Naive thymus-derived CD4-positive, alpha-beta T cell (primary cell): ENCODE measurements at regions of chr19 and their contacts with region 1.

Region 1: DNA sequence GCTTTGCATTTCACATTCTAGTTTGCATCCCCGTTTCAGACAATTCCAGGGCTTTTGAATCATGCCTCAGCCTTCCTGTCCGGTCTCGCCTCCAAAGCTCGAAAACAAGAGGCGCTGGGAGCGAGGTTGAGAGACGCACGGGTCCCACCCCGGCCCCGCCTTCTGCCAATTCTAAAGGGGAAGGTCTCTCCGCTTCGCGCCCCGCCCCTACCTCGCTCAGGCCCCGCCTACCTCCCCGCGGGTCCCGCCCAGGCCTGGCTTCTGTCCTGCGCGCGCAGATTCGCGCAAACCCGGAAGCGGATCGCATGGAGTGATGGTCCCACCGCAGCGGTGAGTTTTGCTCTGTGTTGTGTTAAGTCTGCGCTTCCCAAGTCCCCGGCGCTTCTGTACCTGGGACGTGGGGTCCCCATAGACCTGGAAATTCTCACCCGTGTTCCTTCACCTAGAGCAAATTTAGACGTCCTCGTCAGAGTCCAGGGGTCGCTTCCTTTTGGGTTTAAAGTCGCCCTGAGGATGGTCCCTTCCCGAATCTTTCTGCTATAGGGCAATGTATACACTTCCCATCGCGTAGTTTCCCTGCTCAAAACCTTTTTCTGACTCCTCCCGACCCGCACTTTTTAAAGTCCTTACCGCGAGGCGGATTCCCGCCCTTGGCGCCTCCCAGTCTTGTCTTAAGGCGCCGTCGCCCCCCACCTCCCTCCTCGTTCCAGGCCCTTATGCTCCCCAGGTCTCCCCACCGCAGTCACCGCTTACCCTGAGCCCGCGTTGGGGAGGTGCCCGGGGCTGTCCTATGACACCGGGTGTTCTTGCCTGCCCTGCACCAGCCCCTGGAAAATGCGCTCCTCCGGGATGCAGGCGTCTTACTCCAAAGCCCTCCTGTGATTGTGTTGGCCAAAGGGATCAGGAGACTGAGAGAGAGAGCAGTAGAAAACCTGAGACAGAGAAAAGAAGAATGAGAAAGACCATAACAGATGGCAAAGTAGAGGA is at the start of gene ZNF845:
- DNase-seq: peak; percentile 91 to 99 (median 97)
- ATAC-seq: peak; percentile 99
- H3K4me3 ChIP-seq: peak within 1 kb of the TSS; percentile 93
- H3K4me3 Mint-ChIP-seq: peak within 1 kb of the TSS; percentile 87 to 97 (median 94)
- H3K27ac ChIP-seq: peak within 1 kb of the TSS; percentile 74
- H3K27ac Mint-ChIP-seq: peak within 1 kb of the TSS; percentile 87 to 97 (median 89)
- H3K4me1 ChIP-seq: peaks cover 0 to 5% of the 10 kb centered on the region in 2 donors
- H3K4me1 Mint-ChIP-seq: peaks cover 14 to 43% (median 22%) of the 10 kb centered on the region in 7 donors
- H3K27me3 ChIP-seq: no peaks in the 10 kb centered on the region
- H3K27me3 Mint-ChIP-seq: peaks cover 0 to 8% (median 6%) of the 10 kb centered on the region in 5 donors
- total RNA-seq, gene ZNF845: 4.6 to 18.9 (median 11.1) TPM

Region 2: GRCh38 chr19:52527134-52527955 is 806.4 kb before region 1 on chr19 and contains the start of gene ZNF808:
- CTCF ChIA-PET with region 1: no interaction called
- POLR2A ChIA-PET with region 1: no interaction called
- intact Hi-C with region 1: loop called (anchors 1 to 2 kb)
- DNase-seq: peak; percentile 79 to 95 (median 90)
- ATAC-seq: peak; percentile 99
- H3K4me3 ChIP-seq: peak within 1 kb of the TSS; percentile 99
- H3K4me3 Mint-ChIP-seq: peak within 1 kb of the TSS; percentile 91 to 100 (median 98)
- H3K27ac ChIP-seq: peak within 1 kb of the TSS; percentile 91
- H3K27ac Mint-ChIP-seq: peak within 1 kb of the TSS; percentile 84 to 99 (median 98)
- H3K4me1 ChIP-seq: peaks cover 9 to 12% of the 10 kb centered on the region in 2 donors
- H3K4me1 Mint-ChIP-seq: peaks cover 18 to 34% (median 25%) of the 10 kb centered on the region in 7 donors
- H3K27me3 ChIP-seq: no peaks in the 10 kb centered on the region
- H3K27me3 Mint-ChIP-seq: no peaks in the 10 kb centered on the region
- total RNA-seq, gene ZNF808: 17.7 to 52.4 (median 33.7) TPM

Region 3: DNA sequence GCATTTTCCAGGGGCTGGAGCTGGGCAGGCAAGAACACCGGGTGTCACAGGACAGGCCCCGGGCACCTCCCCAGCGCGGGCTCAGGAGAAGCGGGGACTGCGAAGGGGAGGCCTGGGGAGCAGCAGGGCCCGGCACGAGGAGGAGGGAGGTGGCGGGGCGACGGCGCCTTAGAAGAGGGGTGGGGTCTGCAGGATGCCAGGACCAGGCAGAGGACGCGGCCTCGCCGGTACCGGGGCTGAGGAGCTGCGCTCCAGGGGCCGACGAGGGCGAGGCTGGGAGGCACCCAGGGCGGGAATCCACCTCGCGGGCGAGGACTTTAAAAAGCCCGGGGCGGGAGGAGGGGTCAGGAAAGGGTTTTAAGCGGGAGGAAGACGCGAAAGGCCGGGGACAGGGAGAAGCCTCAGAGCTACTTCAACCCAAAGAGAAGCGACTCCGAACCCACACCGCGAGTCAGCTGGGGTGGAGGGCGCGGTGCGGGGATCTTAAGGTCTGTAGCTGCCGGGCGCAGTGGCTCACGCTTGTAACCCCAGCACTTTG is 175.6 kb before region 1 on chr19:
- CTCF ChIA-PET with region 1: no interaction called
- POLR2A ChIA-PET with region 1: no interaction called
- intact Hi-C with region 1: loop called in 1 of 2 experiments (anchors 1 kb)
- DNase-seq: peak in 5 of 9 donors; percentile 9 to 41 (median 26)
- ATAC-seq: peak; percentile 35
- H3K4me3 ChIP-seq: peak overlapping the region; percentile 97
- H3K4me3 Mint-ChIP-seq: peak overlapping the region; percentile 65 to 91 (median 86)
- H3K27ac ChIP-seq: peak overlapping the region; percentile 70
- H3K27ac Mint-ChIP-seq: peak overlapping the region; percentile 44 to 90 (median 85)
- H3K4me1 ChIP-seq: peaks cover 4 to 7% of the 10 kb centered on the region in 2 donors
- H3K4me1 Mint-ChIP-seq: peaks cover 12 to 32% (median 27%) of the 10 kb centered on the region in 7 donors
- H3K27me3 ChIP-seq: no peaks in the 10 kb centered on the region
- H3K27me3 Mint-ChIP-seq: no peaks in the 10 kb centered on the region

Region 4: DNA sequence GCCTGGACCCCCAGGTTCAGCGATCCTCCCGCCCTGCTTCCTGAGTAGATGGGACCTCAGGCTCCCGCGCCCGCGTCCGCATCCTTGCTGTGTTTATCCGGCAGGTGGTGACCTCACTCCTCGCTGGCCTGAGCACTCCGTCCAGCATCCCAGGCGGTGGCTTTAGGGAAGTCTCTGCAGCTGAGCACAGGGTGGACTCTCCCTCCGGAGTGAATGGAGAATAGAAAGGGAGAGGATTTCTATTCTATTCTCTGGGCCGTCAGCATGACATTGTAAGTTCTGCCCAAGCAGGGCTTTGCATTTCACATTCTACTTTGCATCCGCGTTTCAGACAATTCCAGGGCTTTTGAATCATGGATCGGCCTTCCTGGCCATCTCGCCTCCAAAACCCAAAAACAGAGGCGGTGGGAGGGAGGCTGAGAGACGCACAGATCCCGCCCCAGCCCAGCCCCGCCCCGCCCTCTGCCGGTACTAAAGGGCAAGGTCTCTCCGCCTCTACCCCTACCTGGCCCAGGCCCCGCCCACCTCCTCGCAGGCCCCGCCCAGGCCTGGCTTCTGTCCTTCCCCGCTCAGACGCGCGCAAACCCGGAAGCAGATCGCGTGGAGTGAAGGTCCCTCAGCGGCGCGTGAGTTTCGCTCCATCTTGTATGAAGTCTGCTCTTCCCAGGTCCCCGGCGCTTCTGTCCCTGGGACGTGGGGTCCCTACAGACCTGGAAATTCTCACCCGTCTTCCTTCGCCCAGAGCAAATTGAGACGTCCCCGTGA is 31.6 kb after region 1 on chr19 and contains the start of gene ZNF525:
- CTCF ChIA-PET with region 1: interaction called, 5 read pairs
- POLR2A ChIA-PET with region 1: no interaction called
- intact Hi-C with region 1: loop called (anchors 1 kb)
- DNase-seq: peak; percentile 94 to 97 (median 96)
- ATAC-seq: peak; percentile 100
- H3K4me3 ChIP-seq: peak within 1 kb of the TSS; percentile 96
- H3K4me3 Mint-ChIP-seq: peak within 1 kb of the TSS; percentile 94 to 98 (median 96)
- H3K27ac ChIP-seq: peak within 1 kb of the TSS; percentile 80
- H3K27ac Mint-ChIP-seq: peak within 1 kb of the TSS; percentile 91 to 98 (median 94)
- H3K4me1 ChIP-seq: no peaks in the 10 kb centered on the region
- H3K4me1 Mint-ChIP-seq: peaks cover 12 to 35% (median 31%) of the 10 kb centered on the region in 7 donors
- H3K27me3 ChIP-seq: no peaks in the 10 kb centered on the region
- H3K27me3 Mint-ChIP-seq: no peaks in the 10 kb centered on the region
- total RNA-seq, gene ZNF525: 11.5 to 33.7 (median 24.2) TPM

Region 5: GRCh38 chr19:53388168-53388567 is 54.4 kb after region 1 on chr19:
- CTCF ChIA-PET with region 1: no interaction called
- POLR2A ChIA-PET with region 1: no interaction called
- intact Hi-C with region 1: no loop called
- DNase-seq: no peak
- ATAC-seq: no peak
- H3K4me3 ChIP-seq: no peak overlapping the region
- H3K4me3 Mint-ChIP-seq: no peak overlapping the region
- H3K27ac ChIP-seq: no peak overlapping the region
- H3K27ac Mint-ChIP-seq: no peak overlapping the region
- H3K4me1 ChIP-seq: no peaks in the 10 kb centered on the region
- H3K4me1 Mint-ChIP-seq: no peaks in the 10 kb centered on the region
- H3K27me3 ChIP-seq: no peaks in the 10 kb centered on the region
- H3K27me3 Mint-ChIP-seq: no peaks in the 10 kb centered on the region

Region 6: DNA sequence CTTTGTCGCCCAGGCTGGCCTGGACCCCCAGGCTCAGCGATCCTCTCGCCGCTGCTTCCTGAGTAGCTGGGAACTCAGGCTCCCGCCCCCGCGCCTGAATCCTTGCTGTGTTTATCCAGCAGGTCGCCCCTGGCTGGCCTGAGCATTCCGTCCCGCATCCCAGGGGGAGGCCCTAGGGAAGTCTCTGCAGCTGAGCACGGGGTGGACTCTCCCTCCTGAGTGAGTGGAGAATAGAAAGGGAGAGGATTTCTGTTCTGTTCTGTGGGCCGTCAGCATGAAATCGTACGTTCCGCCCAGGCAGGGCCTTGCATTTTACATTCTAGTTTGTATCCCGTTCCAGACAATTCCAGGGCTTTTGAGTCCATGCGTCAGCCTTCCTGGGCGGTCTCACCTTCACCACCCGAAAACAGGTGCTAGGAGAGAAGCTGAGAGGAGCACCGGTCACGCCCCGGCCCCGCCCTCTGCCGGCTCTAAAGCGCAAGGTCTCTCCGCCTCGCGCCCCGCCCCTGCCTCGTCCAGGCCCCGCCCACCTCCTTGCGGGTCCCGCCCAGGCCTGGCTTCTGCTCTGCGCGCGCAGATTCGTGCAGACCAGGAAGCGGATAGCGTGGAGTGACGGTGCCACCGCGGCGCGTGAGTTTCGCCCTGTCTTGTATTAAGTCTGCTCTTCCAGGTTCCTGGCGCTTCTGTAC is 97.8 kb after region 1 on chr19 and contains the start of gene ZNF761:
- CTCF ChIA-PET with region 1: no interaction called
- POLR2A ChIA-PET with region 1: interaction called, 3 read pairs
- intact Hi-C with region 1: loop called in 1 of 2 experiments (anchors 2 kb)
- DNase-seq: peak; percentile 94 to 99 (median 98)
- ATAC-seq: peak; percentile 100
- H3K4me3 ChIP-seq: peak within 1 kb of the TSS; percentile 91
- H3K4me3 Mint-ChIP-seq: peak within 1 kb of the TSS; percentile 94 to 99 (median 97)
- H3K27ac ChIP-seq: peak within 1 kb of the TSS; percentile 79
- H3K27ac Mint-ChIP-seq: peak within 1 kb of the TSS; percentile 90 to 99 (median 96)
- H3K4me1 ChIP-seq: peaks cover 6 to 16% of the 10 kb centered on the region in 2 donors
- H3K4me1 Mint-ChIP-seq: peaks cover 20 to 55% (median 35%) of the 10 kb centered on the region in 7 donors
- H3K27me3 ChIP-seq: no peaks in the 10 kb centered on the region
- H3K27me3 Mint-ChIP-seq: no peaks in the 10 kb centered on the region
- total RNA-seq, gene ZNF761: 8.0 to 18.8 (median 13.1) TPM

Region 7: GRCh38 chr19:53520550-53521372 is 187.0 kb after region 1 on chr19:
- CTCF ChIA-PET with region 1: no interaction called
- POLR2A ChIA-PET with region 1: no interaction called
- intact Hi-C with region 1: loop called (anchors 1 kb)
- DNase-seq: peak; percentile 65 to 93 (median 89)
- ATAC-seq: peak; percentile 100
- H3K4me3 ChIP-seq: peak overlapping the region; percentile 99
- H3K4me3 Mint-ChIP-seq: peak overlapping the region; percentile 94 to 99 (median 98)
- H3K27ac ChIP-seq: peak overlapping the region; percentile 69
- H3K27ac Mint-ChIP-seq: peak overlapping the region; percentile 84 to 96 (median 94)
- H3K4me1 ChIP-seq: peaks cover 9 to 10% of the 10 kb centered on the region in 2 donors
- H3K4me1 Mint-ChIP-seq: peaks cover 10 to 27% (median 18%) of the 10 kb centered on the region in 7 donors
- H3K27me3 ChIP-seq: no peaks in the 10 kb centered on the region
- H3K27me3 Mint-ChIP-seq: no peaks in the 10 kb centered on the region